Mammary epithelial cell (primary cell): ENCODE measurements at regions of chr1 and their contacts with region 1.

Region 1: DNA sequence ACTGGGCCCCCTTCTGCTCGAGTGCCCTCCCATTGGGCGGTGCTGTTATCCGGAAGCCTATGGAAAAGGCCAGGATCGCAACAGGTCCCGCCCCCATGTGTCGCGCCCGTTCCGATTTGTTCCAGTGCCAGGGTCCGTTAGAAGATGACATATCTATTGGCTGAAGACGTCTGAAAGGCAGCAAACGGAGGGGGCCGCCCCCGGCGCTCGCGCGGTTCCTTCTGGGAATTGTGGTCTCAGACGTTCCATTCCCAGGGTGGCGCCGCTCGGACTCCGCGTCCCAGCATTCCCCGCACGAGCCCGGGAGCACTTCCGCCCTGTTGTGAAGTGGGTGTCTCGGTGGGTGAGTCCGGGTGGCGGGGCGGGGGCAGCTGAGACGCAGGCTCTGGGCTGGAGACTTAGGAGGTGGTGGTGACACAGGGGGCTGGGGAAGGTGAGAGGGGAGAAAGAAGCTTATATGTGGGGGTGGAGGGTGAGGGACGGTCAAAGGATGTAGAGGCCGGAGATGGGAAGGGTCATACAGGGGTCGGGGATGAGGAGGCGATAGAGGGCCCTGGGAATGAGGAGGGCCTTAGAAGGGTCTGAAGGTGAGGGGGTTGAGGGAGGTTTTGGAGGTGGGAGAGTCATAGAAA is at the start of gene ZSCAN20:
- DNase-seq: peak; percentile 97
- H3K4me3 ChIP-seq: peak within 1 kb of the TSS; percentile 72 to 84 (median 79)
- H3K27ac ChIP-seq: peak within 1 kb of the TSS; percentile 44
- H3K4me1 ChIP-seq: peaks cover 19% of the 10 kb centered on the region
- H3K27me3 ChIP-seq: no peaks in the 10 kb centered on the region
- CTCF ChIP-seq: no peak
- total RNA-seq, gene ZSCAN20: 5.3 to 8.0 TPM

Region 2: DNA sequence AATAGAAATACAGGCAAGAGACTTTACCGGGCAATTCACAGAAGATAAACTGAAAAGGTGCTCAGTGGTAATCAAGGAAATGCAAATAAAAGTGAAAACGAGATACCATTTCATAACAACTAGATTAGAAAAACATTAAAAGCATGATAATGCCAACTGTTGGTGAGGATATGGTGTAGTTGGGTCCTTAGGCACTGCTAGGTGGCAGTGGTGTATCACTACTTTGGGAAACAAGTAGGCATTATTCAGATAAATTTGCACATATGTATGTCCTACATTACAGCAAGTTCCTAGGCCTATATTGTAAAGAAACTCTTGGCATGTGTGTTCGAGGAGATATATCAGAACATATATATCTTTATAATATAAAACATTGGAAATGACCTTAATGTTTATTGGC is 360.5 kb before region 1 on chr1:
- CTCF ChIA-PET with region 1: interaction called, 7 read pairs
- dilution Hi-C with region 1: no loop called
- in situ Hi-C with region 1: loop called in 1 of 2 experiments (anchors 10 kb)
- intact Hi-C with region 1: loop called (anchors 1 kb)
- DNase-seq: peak; percentile 26
- H3K4me3 ChIP-seq: no peak overlapping the region
- H3K27ac ChIP-seq: no peak overlapping the region
- H3K4me1 ChIP-seq: no peaks in the 10 kb centered on the region
- H3K27me3 ChIP-seq: no peaks in the 10 kb centered on the region
- CTCF ChIP-seq: peak; percentile 48 to 62

Region 3: GRCh38 chr1:33147997-33148314 is 324.5 kb before region 1 on chr1:
- CTCF ChIA-PET with region 1: no interaction called
- dilution Hi-C with region 1: loop called (anchors 10 kb)
- in situ Hi-C with region 1: no loop called
- intact Hi-C with region 1: no loop called
- DNase-seq: no peak
- H3K4me3 ChIP-seq: no peak overlapping the region
- H3K27ac ChIP-seq: no peak overlapping the region
- H3K4me1 ChIP-seq: peaks cover 13% of the 10 kb centered on the region
- H3K27me3 ChIP-seq: no peaks in the 10 kb centered on the region
- CTCF ChIP-seq: peak; percentile 46

Region 4: DNA sequence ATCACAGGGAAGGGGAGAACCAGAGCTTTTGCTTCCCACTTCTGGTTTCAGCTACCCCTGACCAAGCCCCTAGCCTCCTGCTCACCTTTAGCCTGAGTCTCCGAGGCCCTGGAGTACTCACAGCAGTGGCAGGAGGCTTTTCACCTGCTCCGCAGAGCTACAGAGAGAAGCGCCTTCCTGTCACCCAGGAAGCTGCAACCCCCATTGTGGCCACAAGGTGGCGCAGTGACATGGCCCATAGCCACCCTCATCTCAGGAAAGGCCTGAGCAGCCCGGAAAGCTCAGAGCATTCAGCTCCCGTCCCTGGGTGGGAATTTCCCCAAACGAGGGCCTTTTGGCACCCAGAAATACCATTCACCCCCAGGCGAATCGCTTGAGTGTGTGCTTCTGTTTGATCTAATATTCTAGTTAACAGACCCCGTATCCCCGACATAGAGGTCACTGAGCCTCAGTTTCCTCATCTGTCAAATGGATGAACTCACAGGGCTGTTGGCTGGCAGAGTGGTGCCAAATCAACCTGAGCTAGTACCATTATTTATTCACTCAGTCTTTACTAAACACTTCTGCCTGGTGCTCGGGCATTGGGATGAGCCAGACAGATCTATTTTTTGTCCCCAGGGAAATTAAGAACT is 176.9 kb before region 1 on chr1:
- CTCF ChIA-PET with region 1: interaction called, 10 read pairs
- dilution Hi-C with region 1: no loop called
- in situ Hi-C with region 1: loop called in 1 of 2 experiments (anchors 5 kb)
- intact Hi-C with region 1: loop called (anchors 1 kb)
- DNase-seq: peak; percentile 76
- H3K4me3 ChIP-seq: no peak overlapping the region
- H3K27ac ChIP-seq: no peak overlapping the region
- H3K4me1 ChIP-seq: no peaks in the 10 kb centered on the region
- H3K27me3 ChIP-seq: no peaks in the 10 kb centered on the region
- CTCF ChIP-seq: peak; percentile 94 to 97

Region 5: DNA sequence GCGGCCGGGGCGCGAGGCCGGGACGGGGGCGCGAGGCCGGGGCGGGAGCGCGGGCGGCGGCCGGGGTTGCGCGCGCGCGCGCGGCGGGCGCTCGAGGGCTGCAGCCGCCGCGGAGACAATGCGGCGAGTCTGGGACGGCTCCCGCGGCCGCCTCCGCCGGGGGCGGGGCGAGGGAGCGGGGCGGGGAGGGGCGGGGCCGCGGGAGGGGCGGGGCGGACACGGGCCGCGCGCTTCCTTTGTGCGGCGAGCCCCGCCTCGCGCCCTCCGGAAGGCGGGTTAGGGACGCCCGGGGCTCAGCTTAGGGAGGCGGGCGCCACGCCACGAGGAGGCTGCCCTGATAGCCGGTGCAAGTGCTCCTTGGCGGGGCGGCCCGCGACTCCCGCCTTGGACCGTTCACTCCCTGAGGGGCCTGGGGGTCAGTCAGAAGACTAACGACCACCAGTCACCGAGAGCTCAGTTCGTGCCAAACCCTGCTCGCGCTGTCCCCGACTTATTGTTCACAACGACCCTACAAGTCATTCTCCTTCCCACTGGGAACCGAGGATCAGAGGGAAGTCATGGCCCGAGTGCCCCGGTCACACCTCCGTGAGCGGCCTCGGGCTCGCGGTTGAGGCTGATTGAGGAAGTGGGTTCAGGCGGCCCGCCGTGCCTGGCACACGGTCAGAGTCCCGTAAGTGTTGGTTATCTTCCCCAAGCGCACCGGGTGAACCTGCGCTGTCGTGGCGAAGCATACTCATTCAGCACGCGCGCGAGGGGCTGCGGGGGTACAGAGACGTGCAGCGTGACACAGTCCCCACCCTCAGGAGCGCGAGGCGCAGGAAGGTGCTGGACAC is 122.5 kb before region 1 on chr1:
- CTCF ChIA-PET with region 1: no interaction called
- dilution Hi-C with region 1: no loop called
- in situ Hi-C with region 1: loop called in 1 of 2 experiments (anchors 25 kb)
- intact Hi-C with region 1: no loop called
- DNase-seq: peak; percentile 72
- H3K4me3 ChIP-seq: peak overlapping the region; percentile 45 to 82 (median 73)
- H3K27ac ChIP-seq: peak overlapping the region; percentile 41
- H3K4me1 ChIP-seq: peaks cover 38% of the 10 kb centered on the region
- H3K27me3 ChIP-seq: no peaks in the 10 kb centered on the region
- CTCF ChIP-seq: no peak

Region 6: DNA sequence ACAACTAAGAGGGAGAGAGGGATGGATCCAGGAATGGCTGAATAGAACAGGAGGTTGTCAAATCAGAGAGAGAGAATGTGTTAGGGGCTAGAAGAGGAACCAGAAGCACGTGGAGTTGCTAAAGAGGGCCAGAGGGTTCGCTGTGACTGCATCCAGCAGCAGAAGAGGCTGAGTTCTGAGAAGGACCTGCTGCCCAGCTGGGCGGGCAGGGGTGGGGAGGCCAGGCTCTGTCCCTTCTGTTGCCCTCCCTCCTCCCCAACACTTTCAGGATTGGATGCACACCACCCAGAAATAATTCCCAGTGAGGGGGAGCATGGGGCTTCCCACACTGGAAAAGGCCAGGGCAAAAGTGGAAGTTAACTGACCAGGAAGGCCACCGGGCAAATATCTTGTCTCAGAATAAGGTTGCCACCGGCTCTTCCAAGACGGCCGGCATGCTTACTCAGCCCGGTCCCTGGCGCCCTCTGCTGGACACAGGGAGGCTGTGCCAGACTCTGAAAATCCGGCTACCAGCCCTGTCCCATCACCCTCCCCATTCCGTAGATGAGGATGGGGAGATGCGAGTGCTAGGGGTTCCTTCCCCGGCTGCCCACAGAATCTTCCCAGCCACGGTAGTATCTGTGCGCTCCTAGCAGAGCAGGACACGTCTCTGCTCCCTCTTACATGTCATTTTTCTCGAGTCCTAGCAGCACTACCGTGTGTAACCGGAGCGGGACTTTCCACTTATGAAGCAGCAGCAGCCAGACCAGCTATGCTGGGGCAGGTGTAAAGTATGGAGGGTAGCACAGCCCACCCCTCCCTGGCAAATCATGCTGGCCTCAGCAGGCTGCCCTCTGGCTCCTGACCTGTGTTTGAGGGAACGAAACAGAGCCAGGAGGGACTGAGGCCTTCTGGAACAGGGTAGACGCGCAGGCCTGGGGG is 104.7 kb before region 1 on chr1:
- CTCF ChIA-PET with region 1: no interaction called
- dilution Hi-C with region 1: no loop called
- in situ Hi-C with region 1: loop called (anchors 10 to 25 kb)
- intact Hi-C with region 1: loop called (anchors 1 kb)
- DNase-seq: peak; percentile 62
- H3K4me3 ChIP-seq: no peak overlapping the region
- H3K27ac ChIP-seq: no peak overlapping the region
- H3K4me1 ChIP-seq: peaks cover 34% of the 10 kb centered on the region
- H3K27me3 ChIP-seq: no peaks in the 10 kb centered on the region
- CTCF ChIP-seq: peak; percentile 94 to 99

Region 7: DNA sequence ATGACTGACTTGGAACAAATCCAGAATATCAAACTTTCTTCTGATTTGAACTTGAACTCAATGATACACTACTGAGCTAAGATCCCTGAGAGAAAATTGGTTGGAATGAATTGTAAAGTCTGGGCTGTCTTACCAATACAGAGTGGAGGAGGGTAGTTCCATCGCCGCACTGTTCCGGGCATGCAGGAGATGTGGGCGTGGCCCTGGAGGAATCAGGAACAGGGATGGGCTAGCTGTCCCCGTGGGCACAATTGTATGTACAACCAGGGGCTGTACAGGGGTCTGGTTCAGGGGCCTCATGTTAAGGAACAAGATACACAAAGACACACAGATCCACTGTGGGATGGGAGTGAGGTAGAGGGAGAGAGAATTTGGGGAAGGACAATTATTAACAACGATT is 144.3 kb after region 1 on chr1:
- CTCF ChIA-PET with region 1: interaction called, 4 read pairs
- dilution Hi-C with region 1: no loop called
- in situ Hi-C with region 1: no loop called
- intact Hi-C with region 1: loop called (anchors 1 kb)
- DNase-seq: no peak
- H3K4me3 ChIP-seq: no peak overlapping the region
- H3K27ac ChIP-seq: no peak overlapping the region
- H3K4me1 ChIP-seq: no peaks in the 10 kb centered on the region
- H3K27me3 ChIP-seq: no peaks in the 10 kb centered on the region
- CTCF ChIP-seq: no peak